ENCODE measurements at regions of chr17 and their contacts with region 1.

Region 1: GRCh38 chr17:17963066-17963465 is 9.1 kb downstream of the TOM1L2 start:
- DNase-seq: no peak
- H3K4me3 ChIP-seq: no peak overlapping the region
- H3K27ac ChIP-seq: no peak overlapping the region
- H3K4me1 ChIP-seq: peaks cover 0 to 65% (median 46%) of the 10 kb centered on the region in 4 donors
- H3K27me3 ChIP-seq: no peaks in the 10 kb centered on the region
- CTCF ChIP-seq: no peak
- EP300 ChIP-seq: no peak
- POLR2A ChIP-seq: no peak

Region 2: GRCh38 chr17:17993366-17993765 is 30.3 kb after region 1 on chr17:
- intact Hi-C with region 1: loop called (anchors 2 kb)
- DNase-seq: no peak
- H3K4me3 ChIP-seq: no peak overlapping the region
- H3K27ac ChIP-seq: no peak overlapping the region
- H3K4me1 ChIP-seq: no peaks in the 10 kb centered on the region
- H3K27me3 ChIP-seq: no peaks in the 10 kb centered on the region
- CTCF ChIP-seq: no peak
- EP300 ChIP-seq: no peak
- POLR2A ChIP-seq: no peak

Region 3: DNA sequence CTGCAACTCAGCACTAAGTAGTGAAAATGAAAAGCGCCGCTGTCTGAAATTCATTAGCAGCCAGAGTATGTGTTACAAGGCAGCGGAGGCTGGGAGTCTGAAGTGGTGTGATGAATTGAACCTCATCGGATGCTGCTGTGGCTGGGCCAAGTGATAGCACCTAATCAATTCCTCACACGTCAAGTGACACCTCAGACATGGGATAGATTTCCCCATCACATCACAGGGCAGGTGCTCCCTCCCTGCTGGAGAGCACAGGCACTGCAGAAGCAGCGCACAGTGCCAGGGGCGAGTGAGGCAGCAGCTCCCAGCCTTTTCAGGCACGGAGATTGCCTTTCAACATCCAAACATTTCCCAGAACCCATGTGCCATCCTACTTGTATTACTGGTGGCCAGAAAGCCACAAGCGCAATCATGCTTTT is 41.8 kb after region 1 on chr17:
- intact Hi-C with region 1: no loop called
- DNase-seq: no peak
- H3K4me3 ChIP-seq: no peak overlapping the region
- H3K27ac ChIP-seq: no peak overlapping the region
- H3K4me1 ChIP-seq: no peaks in the 10 kb centered on the region
- H3K27me3 ChIP-seq: no peaks in the 10 kb centered on the region
- CTCF ChIP-seq: no peak
- EP300 ChIP-seq: no peak
- POLR2A ChIP-seq: no peak

Measured in sigmoid colon (tissue), 7 donors.